GM12878 (cell line): ENCODE measurements at regions of chr17 and their contacts with region 1.

Region 1: GRCh38 chr17:46115699-46116098 is 77.5 kb downstream of the KANSL1 start:
- DNase-seq: no peak
- ATAC-seq: no peak
- H3K4me3 ChIP-seq: no peak overlapping the region
- H3K27ac ChIP-seq: no peak overlapping the region
- H3K4me1 ChIP-seq: peaks cover 17% of the 10 kb centered on the region
- H3K27me3 ChIP-seq: no peaks in the 10 kb centered on the region
- CTCF ChIP-seq: no peak
- EP300 ChIP-seq: no peak
- POLR2A ChIP-seq: no peak
- RAD21 ChIP-seq: no peak

Region 2: DNA sequence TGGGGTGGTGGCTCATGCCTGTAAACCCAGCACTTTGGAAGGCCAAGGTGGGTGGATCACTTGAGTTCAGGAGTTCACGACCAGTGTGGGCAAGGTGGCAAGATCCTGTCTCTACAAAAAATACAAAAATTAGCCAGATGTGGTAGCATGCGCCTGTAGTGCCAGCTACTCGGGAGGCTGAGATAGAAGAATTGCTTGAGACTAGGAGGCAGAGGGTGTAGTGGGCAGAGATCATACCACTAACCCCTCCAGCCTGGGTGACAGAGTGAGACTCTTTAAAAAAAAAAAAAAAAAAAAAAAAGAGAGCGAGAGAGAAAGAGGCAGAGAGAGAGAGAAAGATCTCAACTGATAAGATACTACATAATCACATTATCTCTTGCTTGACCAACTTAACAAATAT is 31.6 kb after region 1 on chr17:
- CTCF ChIA-PET with region 1: interaction called, 15 read pairs
- POLR2A ChIA-PET with region 1: interaction called, 23 read pairs
- RAD21 ChIA-PET with region 1: interaction called, 33 read pairs
- SMC1A ChIA-PET with region 1: interaction called, 113 read pairs
- in situ Hi-C with region 1: no loop called
- intact Hi-C with region 1: no loop called
- DNase-seq: no peak
- ATAC-seq: peak; percentile 4
- H3K4me3 ChIP-seq: peak overlapping the region; percentile 17; the same call in 1 of the 2 replicates
- H3K27ac ChIP-seq: peak overlapping the region; percentile 65
- H3K4me1 ChIP-seq: peaks cover 73% of the 10 kb centered on the region
- H3K27me3 ChIP-seq: no peaks in the 10 kb centered on the region
- CTCF ChIP-seq: no peak
- EP300 ChIP-seq: no peak
- POLR2A ChIP-seq: no peak
- RAD21 ChIP-seq: no peak

Region 3: GRCh38 chr17:46274238-46274637 is 158.5 kb after region 1 on chr17:
- CTCF ChIA-PET with region 1: no interaction called
- POLR2A ChIA-PET with region 1: interaction called, 10 read pairs
- RAD21 ChIA-PET with region 1: no interaction called
- SMC1A ChIA-PET with region 1: no interaction called
- in situ Hi-C with region 1: no loop called
- intact Hi-C with region 1: no loop called
- DNase-seq: no peak
- ATAC-seq: no peak
- H3K4me3 ChIP-seq: no peak overlapping the region
- H3K27ac ChIP-seq: no peak overlapping the region
- H3K4me1 ChIP-seq: no peaks in the 10 kb centered on the region
- H3K27me3 ChIP-seq: no peaks in the 10 kb centered on the region
- CTCF ChIP-seq: no peak
- EP300 ChIP-seq: no peak
- POLR2A ChIP-seq: no peak
- RAD21 ChIP-seq: no peak